ENCODE measurements at regions of chr2 and their contacts with region 1.

Region 1: DNA sequence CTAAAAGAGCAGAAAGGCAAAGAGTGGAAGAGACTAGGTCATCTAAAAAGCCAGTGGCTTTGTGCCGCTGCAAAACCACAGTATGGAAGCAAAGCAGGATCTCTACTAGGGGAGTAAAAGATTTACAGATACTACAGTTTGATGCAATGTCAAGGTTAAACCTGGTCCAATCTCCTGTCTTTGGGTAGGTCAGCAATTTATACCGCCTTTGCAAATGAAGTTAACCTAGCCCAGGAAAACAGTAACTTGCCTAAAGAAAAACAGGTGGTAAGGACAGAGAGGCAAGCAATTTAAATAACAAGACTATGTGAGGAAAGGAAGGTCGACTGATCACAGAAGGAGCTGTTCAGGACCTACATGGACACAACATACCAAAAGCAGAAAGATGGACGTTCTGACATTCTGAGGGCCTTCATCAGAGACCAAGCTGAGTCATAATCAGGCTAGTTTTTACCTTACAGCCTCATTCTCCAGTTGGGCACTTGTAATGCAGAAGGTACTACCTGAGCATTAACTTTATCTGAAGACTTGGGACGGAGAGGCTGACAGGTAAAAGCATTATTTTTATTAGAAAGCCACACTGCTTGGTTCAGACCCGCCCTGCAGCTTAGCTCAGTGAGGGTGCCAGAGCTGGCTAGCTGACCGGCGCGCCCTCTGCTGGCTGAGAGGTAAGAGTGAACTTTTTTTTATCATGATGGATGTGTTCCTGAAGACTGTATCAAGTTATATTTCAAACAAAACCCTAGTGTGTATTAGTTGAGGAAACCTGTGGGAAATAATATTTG is 15.9 kb downstream of the CDKL4 start:
- DNase-seq: peak; percentile 72 to 86 (median 76)
- ATAC-seq: peak; percentile 87
- H3K4me3 ChIP-seq: no peak overlapping the region
- H3K27ac ChIP-seq: peak overlapping the region; percentile 0; the same call in 1 of the 3 replicates
- H3K4me1 ChIP-seq: peaks cover 4 to 10% of the 10 kb centered on the region in 2 experiments; a peak in 3 of 5 replicates
- H3K27me3 ChIP-seq: no peaks in the 10 kb centered on the region
- CTCF ChIP-seq: peak; percentile 89 to 92 (median 91)
- EP300 ChIP-seq: no peak; the same call in 1 of the 2 replicates
- POLR2A ChIP-seq: no peak
- RAD21 ChIP-seq: peak; percentile 93 to 95

Region 2: GRCh38 chr2:38535744-38536506 is 691.9 kb before region 1 on chr2:
- CTCF ChIA-PET with region 1: interaction called, 5 read pairs
- POLR2A ChIA-PET with region 1: no interaction called
- in situ Hi-C with region 1: no loop called
- intact Hi-C with region 1: loop called (anchors 5 kb)
- DNase-seq: peak; percentile 83 to 87 (median 85)
- ATAC-seq: peak; percentile 98
- H3K4me3 ChIP-seq: peak overlapping the region; percentile 53
- H3K27ac ChIP-seq: no peak overlapping the region; the same call in 2 of the 3 replicates
- H3K4me1 ChIP-seq: peaks cover 7 to 16% of the 10 kb centered on the region in 2 experiments; a peak in 3 of 5 replicates
- H3K27me3 ChIP-seq: peaks cover 19 to 40% of the 10 kb centered on the region in 2 experiments; a peak in 3 of 5 replicates
- CTCF ChIP-seq: peak; percentile 77 to 93 (median 87)
- EP300 ChIP-seq: no peak
- POLR2A ChIP-seq: no peak
- RAD21 ChIP-seq: peak; percentile 84 to 92

Region 3: DNA sequence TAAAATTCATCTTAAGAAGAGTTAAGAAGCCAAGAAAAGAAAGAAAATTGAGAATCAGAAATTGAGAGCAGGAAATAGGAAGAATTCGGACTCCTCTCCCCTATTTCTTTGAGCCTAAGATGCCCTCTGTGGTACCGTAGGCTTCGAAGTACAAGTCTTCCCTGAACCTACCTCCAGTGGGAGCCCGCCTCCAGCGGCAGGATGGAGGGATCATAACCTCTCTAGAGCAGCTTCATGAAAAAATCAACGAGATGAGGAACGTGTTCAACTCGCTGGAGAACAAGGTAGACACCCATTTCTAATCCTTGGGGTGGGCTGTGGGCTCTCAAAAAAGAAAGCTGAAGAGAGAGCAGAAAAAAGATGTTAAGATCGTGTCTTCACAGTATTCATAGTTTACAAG is 301.8 kb before region 1 on chr2:
- CTCF ChIA-PET with region 1: no interaction called
- POLR2A ChIA-PET with region 1: no interaction called
- in situ Hi-C with region 1: loop called (anchors 25 kb)
- intact Hi-C with region 1: loop called (anchors 1 kb)
- DNase-seq: peak; percentile 20 to 63 (median 39)
- ATAC-seq: peak; percentile 98
- H3K4me3 ChIP-seq: no peak overlapping the region
- H3K27ac ChIP-seq: no peak overlapping the region
- H3K4me1 ChIP-seq: no peaks in the 10 kb centered on the region
- H3K27me3 ChIP-seq: peaks cover 4 to 6% of the 10 kb centered on the region in 2 experiments; a peak in 3 of 5 replicates
- CTCF ChIP-seq: peak; percentile 70 to 74 (median 72)
- EP300 ChIP-seq: no peak
- POLR2A ChIP-seq: no peak
- RAD21 ChIP-seq: peak; percentile 16 to 69; a peak in 2 of 4 replicates

Region 4: GRCh38 chr2:38947240-38948239 is 280.3 kb before region 1 on chr2:
- CTCF ChIA-PET with region 1: interaction called, 3 read pairs
- POLR2A ChIA-PET with region 1: no interaction called
- in situ Hi-C with region 1: loop called (anchors 25 kb)
- intact Hi-C with region 1: loop called (anchors 1 kb)
- DNase-seq: peak; percentile 40 to 73 (median 58)
- ATAC-seq: peak; percentile 86
- H3K4me3 ChIP-seq: no peak overlapping the region
- H3K27ac ChIP-seq: no peak overlapping the region
- H3K4me1 ChIP-seq: peaks cover 3 to 10% of the 10 kb centered on the region in 2 experiments; a peak in 3 of 5 replicates
- H3K27me3 ChIP-seq: no peaks in the 10 kb centered on the region
- CTCF ChIP-seq: peak; percentile 62 to 67 (median 65)
- EP300 ChIP-seq: no peak
- POLR2A ChIP-seq: no peak
- RAD21 ChIP-seq: peak; percentile 41 to 76

Region 5: GRCh38 chr2:39059366-39059952 is 168.4 kb before region 1 on chr2:
- CTCF ChIA-PET with region 1: interaction called, 93 read pairs
- POLR2A ChIA-PET with region 1: interaction called, 9 read pairs
- in situ Hi-C with region 1: loop called (anchors 5 kb)
- intact Hi-C with region 1: loop called (anchors 1 kb)
- DNase-seq: peak in 3 of 4 experiments; percentile 13 to 48 (median 28)
- ATAC-seq: peak; percentile 70
- H3K4me3 ChIP-seq: no peak overlapping the region
- H3K27ac ChIP-seq: no peak overlapping the region
- H3K4me1 ChIP-seq: no peaks in the 10 kb centered on the region
- H3K27me3 ChIP-seq: no peaks in the 10 kb centered on the region
- CTCF ChIP-seq: peak; percentile 50 to 87 (median 52); a peak in 4 of 6 replicates
- EP300 ChIP-seq: no peak
- POLR2A ChIP-seq: no peak
- RAD21 ChIP-seq: peak; percentile 85 to 87

Region 6: DNA sequence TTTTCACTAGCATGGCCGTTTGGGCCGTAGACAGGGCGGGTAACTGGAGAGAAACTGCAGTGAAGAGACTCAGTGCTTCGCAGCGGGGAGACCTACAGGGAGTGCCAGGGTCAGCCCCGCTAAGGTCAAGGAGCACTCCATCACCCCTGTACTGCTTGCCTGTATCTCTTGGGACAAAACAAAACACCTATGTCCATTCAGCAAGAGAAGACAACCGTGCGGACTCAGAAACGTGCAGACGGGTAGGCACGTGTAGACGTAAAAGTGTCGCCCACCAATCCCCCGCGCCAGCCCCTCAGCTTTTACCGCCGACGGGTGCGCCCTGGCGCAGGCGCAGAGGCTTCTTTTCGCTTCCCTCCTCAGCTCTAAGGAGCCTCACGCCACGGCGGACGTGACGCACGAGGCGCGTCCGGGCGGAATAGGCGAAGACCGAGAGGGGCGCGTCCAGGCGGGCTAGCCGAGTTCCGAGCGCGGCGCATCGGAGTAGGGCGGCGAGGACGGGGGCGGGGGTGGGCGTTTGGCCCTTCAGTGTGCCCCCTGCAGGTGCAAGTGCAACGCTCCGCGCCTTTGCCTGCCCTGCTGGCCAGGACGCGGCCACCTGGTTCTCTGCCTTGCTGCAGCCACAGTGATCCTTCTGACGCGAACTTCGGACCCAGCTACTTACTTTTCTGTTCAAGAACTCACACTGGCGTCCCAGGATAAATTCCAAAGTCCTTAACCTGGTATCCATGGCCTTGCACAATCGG is 103.6 kb before region 1 on chr2:
- CTCF ChIA-PET with region 1: interaction called, 16 read pairs
- POLR2A ChIA-PET with region 1: interaction called, 8 read pairs
- in situ Hi-C with region 1: loop called (anchors 10 kb)
- intact Hi-C with region 1: loop called (anchors 1 kb)
- DNase-seq: peak; percentile 88 to 99 (median 89)
- ATAC-seq: peak; percentile 82
- H3K4me3 ChIP-seq: peak overlapping the region; percentile 56
- H3K27ac ChIP-seq: peak overlapping the region; percentile 85
- H3K4me1 ChIP-seq: peaks cover 28% of the 10 kb centered on the region in 2 experiments; a peak in 4 of 5 replicates
- H3K27me3 ChIP-seq: no peaks in the 10 kb centered on the region
- CTCF ChIP-seq: peak; percentile 60 to 89 (median 65)
- EP300 ChIP-seq: peak; percentile 50
- POLR2A ChIP-seq: peak; percentile 84
- RAD21 ChIP-seq: 0 out of 4 replicates have a peak, but pooled peaks have one; percentile 14 to 18

Measured in K562 (cell line).